GM12878 (cell line): ENCODE measurements at regions of chr2 and their contacts with region 1.

Region 1: GRCh38 chr2:118046634-118047210 is 32.9 kb upstream of the CCDC93 start:
- DNase-seq: no peak
- ATAC-seq: peak; percentile 44; the same call in 2 of the 3 replicates
- H3K4me3 ChIP-seq: no peak overlapping the region
- H3K27ac ChIP-seq: no peak overlapping the region
- H3K4me1 ChIP-seq: peaks cover 7% of the 10 kb centered on the region; the same call in 1 of the 2 replicates
- H3K27me3 ChIP-seq: peaks cover 0 to 5% of the 10 kb centered on the region in 2 experiments; a peak in 2 of 4 replicates
- CTCF ChIP-seq: peak; percentile 50 to 73 (median 59)
- EP300 ChIP-seq: no peak
- POLR2A ChIP-seq: no peak
- RAD21 ChIP-seq: peak; percentile 94

Region 2: DNA sequence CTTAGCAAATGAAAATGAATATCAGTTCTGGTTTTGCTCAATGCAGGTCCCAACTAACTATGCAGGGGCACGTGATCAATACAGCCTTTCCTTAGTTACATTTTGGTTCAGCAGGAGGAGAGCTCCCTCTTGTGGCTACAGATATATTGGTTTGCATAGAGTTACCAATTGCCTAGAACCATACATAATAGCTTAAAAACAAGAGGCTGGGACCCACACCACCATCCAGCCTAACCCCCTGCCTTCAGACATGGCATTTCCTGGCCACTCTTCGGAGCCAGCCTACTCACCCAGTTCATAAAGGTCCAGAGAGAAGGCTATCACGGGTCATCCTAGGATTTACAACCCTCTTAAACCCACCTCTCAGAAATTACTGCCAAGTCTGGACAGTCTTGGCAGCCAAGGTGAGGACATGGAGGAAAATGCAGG is 43.3 kb before region 1 on chr2:
- CTCF ChIA-PET with region 1: interaction called, 24 read pairs
- POLR2A ChIA-PET with region 1: no interaction called
- RAD21 ChIA-PET with region 1: interaction called, 5 read pairs
- SMC1A ChIA-PET with region 1: interaction called, 4 read pairs
- in situ Hi-C with region 1: no loop called
- intact Hi-C with region 1: no loop called
- DNase-seq: peak; percentile 48
- ATAC-seq: peak; percentile 99
- H3K4me3 ChIP-seq: no peak overlapping the region
- H3K27ac ChIP-seq: no peak overlapping the region
- H3K4me1 ChIP-seq: no peaks in the 10 kb centered on the region; the same call in 1 of the 2 replicates
- H3K27me3 ChIP-seq: no peaks in the 10 kb centered on the region
- CTCF ChIP-seq: peak; percentile 72 to 89 (median 88)
- EP300 ChIP-seq: no peak
- POLR2A ChIP-seq: no peak
- RAD21 ChIP-seq: peak; percentile 78

Region 3: GRCh38 chr2:118077636-118078247 is 31.0 kb after region 1 on chr2:
- CTCF ChIA-PET with region 1: interaction called, 626 read pairs
- POLR2A ChIA-PET with region 1: no interaction called
- RAD21 ChIA-PET with region 1: interaction called, 6 read pairs
- SMC1A ChIA-PET with region 1: interaction called, 24 read pairs
- in situ Hi-C with region 1: no loop called
- intact Hi-C with region 1: no loop called
- DNase-seq: no peak
- ATAC-seq: no peak
- H3K4me3 ChIP-seq: no peak overlapping the region
- H3K27ac ChIP-seq: no peak overlapping the region
- H3K4me1 ChIP-seq: no peaks in the 10 kb centered on the region
- H3K27me3 ChIP-seq: peaks cover 0 to 15% of the 10 kb centered on the region in 2 experiments; a peak in 2 of 4 replicates
- CTCF ChIP-seq: no peak
- EP300 ChIP-seq: no peak
- POLR2A ChIP-seq: no peak
- RAD21 ChIP-seq: no peak

Region 4: GRCh38 chr2:118148809-118149208 is 102.1 kb after region 1 on chr2:
- CTCF ChIA-PET with region 1: interaction called, 36 read pairs
- POLR2A ChIA-PET with region 1: no interaction called
- RAD21 ChIA-PET with region 1: interaction called, 6 read pairs
- SMC1A ChIA-PET with region 1: interaction called, 29 read pairs
- in situ Hi-C with region 1: no loop called
- intact Hi-C with region 1: loop called (anchors 5 kb)
- DNase-seq: no peak
- ATAC-seq: no peak
- H3K4me3 ChIP-seq: no peak overlapping the region
- H3K27ac ChIP-seq: no peak overlapping the region
- H3K4me1 ChIP-seq: no peaks in the 10 kb centered on the region
- H3K27me3 ChIP-seq: no peaks in the 10 kb centered on the region
- CTCF ChIP-seq: peak in 2 of 3 experiments; percentile 21 to 34; a peak in 3 of 6 replicates
- EP300 ChIP-seq: no peak
- POLR2A ChIP-seq: no peak
- RAD21 ChIP-seq: peak; percentile 45

Region 5: GRCh38 chr2:118202707-118203303 is 156.1 kb after region 1 on chr2:
- CTCF ChIA-PET with region 1: interaction called, 6 read pairs
- POLR2A ChIA-PET with region 1: no interaction called
- RAD21 ChIA-PET with region 1: interaction called, 3 read pairs
- SMC1A ChIA-PET with region 1: interaction called, 7 read pairs
- in situ Hi-C with region 1: no loop called
- intact Hi-C with region 1: loop called (anchors 5 kb)
- DNase-seq: no peak
- ATAC-seq: peak; percentile 98
- H3K4me3 ChIP-seq: no peak overlapping the region
- H3K27ac ChIP-seq: no peak overlapping the region
- H3K4me1 ChIP-seq: no peaks in the 10 kb centered on the region
- H3K27me3 ChIP-seq: no peaks in the 10 kb centered on the region; a peak in 1 of 4 replicates
- CTCF ChIP-seq: peak; percentile 84 to 91 (median 90)
- EP300 ChIP-seq: no peak
- POLR2A ChIP-seq: no peak
- RAD21 ChIP-seq: peak; percentile 62

Region 6: GRCh38 chr2:118855451-118856279 is 808.9 kb after region 1 on chr2:
- CTCF ChIA-PET with region 1: interaction called, 18 read pairs
- POLR2A ChIA-PET with region 1: no interaction called
- RAD21 ChIA-PET with region 1: interaction called, 12 read pairs
- SMC1A ChIA-PET with region 1: interaction called, 7 read pairs
- in situ Hi-C with region 1: loop called (anchors 25 kb)
- intact Hi-C with region 1: loop called (anchors 5 kb)
- DNase-seq: no peak
- ATAC-seq: peak; percentile 98
- H3K4me3 ChIP-seq: no peak overlapping the region; the same call in 1 of the 2 replicates
- H3K27ac ChIP-seq: no peak overlapping the region
- H3K4me1 ChIP-seq: no peaks in the 10 kb centered on the region
- H3K27me3 ChIP-seq: peaks cover 18 to 35% of the 10 kb centered on the region in 2 experiments
- CTCF ChIP-seq: peak; percentile 88 to 94 (median 88)
- EP300 ChIP-seq: no peak
- POLR2A ChIP-seq: no peak
- RAD21 ChIP-seq: peak; percentile 81